Mammary epithelial cell (primary cell): ENCODE measurements at regions of chr3 and their contacts with region 1.

Region 1: DNA sequence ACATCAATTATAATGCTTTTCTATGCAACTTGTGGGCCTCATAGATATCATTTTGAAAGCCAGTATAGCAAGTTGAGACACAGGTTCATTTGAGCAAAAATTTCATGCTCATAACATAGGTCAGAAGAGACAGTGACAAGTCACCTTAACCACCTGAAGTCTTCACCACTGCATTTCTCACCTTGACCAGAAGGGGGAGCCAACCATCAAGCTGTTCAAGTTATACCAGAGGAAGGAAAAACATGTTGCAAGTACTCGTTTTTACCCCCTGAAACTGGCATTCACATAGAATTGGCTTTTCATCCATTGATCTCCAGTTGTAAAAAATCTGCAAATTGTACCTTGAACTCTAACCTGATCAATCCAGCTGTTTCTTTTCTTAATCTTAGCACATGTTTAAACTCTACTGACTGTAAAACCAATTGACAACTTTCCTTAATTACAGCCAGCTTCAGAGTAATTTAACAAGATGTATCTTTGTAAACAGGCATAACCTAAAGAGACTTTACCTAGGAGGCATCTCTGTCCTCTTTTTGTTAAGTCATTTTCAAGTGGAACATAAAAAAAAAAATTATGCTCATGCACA is 1.4 kb downstream of the LMOD3 start:
- DNase-seq: peak; percentile 67
- H3K4me3 ChIP-seq: no peak overlapping the region
- H3K27ac ChIP-seq: no peak overlapping the region
- H3K4me1 ChIP-seq: peaks cover 12% of the 10 kb centered on the region
- H3K27me3 ChIP-seq: no peaks in the 10 kb centered on the region
- CTCF ChIP-seq: peak; percentile 96 to 99

Region 2: DNA sequence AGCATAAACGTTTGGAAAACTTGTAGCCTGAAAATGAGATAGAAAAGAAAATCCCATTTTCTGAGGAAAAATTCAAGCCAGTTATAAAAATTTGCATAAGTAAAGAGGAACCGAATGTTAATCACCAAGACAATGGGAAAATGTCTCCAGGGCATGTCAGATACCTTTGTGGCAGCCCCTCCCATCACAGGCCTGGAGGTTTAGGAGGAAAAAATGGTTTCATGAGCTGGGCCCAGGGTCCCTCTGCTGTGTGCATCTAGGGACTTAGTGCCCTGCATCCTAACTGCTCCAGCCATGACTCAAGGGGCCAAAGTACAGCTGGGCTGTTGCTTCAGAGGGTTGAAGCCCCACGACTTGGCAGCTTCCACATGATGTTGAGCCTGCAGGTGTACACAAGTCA is 341.7 kb before region 1 on chr3:
- CTCF ChIA-PET with region 1: no interaction called
- dilution Hi-C with region 1: no loop called
- in situ Hi-C with region 1: no loop called
- intact Hi-C with region 1: no loop called
- DNase-seq: no peak
- H3K4me3 ChIP-seq: no peak overlapping the region
- H3K27ac ChIP-seq: no peak overlapping the region
- H3K4me1 ChIP-seq: no peaks in the 10 kb centered on the region
- H3K27me3 ChIP-seq: no peaks in the 10 kb centered on the region
- CTCF ChIP-seq: no peak

Region 3: GRCh38 chr3:68893600-68894239 is 227.3 kb before region 1 on chr3:
- CTCF ChIA-PET with region 1: no interaction called
- dilution Hi-C with region 1: no loop called
- in situ Hi-C with region 1: no loop called
- intact Hi-C with region 1: no loop called
- DNase-seq: peak; percentile 16
- H3K4me3 ChIP-seq: no peak overlapping the region
- H3K27ac ChIP-seq: no peak overlapping the region
- H3K4me1 ChIP-seq: no peaks in the 10 kb centered on the region
- H3K27me3 ChIP-seq: no peaks in the 10 kb centered on the region
- CTCF ChIP-seq: peak; percentile 23 to 44

Region 4: GRCh38 chr3:69051756-69052471 is 69.1 kb before region 1 on chr3 and contains the start of gene TMF1:
- CTCF ChIA-PET with region 1: no interaction called
- dilution Hi-C with region 1: no loop called
- in situ Hi-C with region 1: no loop called
- intact Hi-C with region 1: loop called (anchors 5 kb)
- DNase-seq: peak; percentile 98
- H3K4me3 ChIP-seq: peak within 1 kb of the TSS; percentile 75 to 94 (median 90)
- H3K27ac ChIP-seq: peak within 1 kb of the TSS; percentile 91
- H3K4me1 ChIP-seq: peaks cover 10% of the 10 kb centered on the region
- H3K27me3 ChIP-seq: no peaks in the 10 kb centered on the region
- CTCF ChIP-seq: no peak
- total RNA-seq, gene TMF1: 35.4 to 46.3 TPM

Region 5: GRCh38 chr3:69250014-69250413 is 129.0 kb after region 1 on chr3:
- CTCF ChIA-PET with region 1: no interaction called
- dilution Hi-C with region 1: no loop called
- in situ Hi-C with region 1: no loop called
- intact Hi-C with region 1: no loop called
- DNase-seq: no peak
- H3K4me3 ChIP-seq: no peak overlapping the region
- H3K27ac ChIP-seq: no peak overlapping the region
- H3K4me1 ChIP-seq: peaks cover 11% of the 10 kb centered on the region
- H3K27me3 ChIP-seq: no peaks in the 10 kb centered on the region
- CTCF ChIP-seq: no peak

Region 6: DNA sequence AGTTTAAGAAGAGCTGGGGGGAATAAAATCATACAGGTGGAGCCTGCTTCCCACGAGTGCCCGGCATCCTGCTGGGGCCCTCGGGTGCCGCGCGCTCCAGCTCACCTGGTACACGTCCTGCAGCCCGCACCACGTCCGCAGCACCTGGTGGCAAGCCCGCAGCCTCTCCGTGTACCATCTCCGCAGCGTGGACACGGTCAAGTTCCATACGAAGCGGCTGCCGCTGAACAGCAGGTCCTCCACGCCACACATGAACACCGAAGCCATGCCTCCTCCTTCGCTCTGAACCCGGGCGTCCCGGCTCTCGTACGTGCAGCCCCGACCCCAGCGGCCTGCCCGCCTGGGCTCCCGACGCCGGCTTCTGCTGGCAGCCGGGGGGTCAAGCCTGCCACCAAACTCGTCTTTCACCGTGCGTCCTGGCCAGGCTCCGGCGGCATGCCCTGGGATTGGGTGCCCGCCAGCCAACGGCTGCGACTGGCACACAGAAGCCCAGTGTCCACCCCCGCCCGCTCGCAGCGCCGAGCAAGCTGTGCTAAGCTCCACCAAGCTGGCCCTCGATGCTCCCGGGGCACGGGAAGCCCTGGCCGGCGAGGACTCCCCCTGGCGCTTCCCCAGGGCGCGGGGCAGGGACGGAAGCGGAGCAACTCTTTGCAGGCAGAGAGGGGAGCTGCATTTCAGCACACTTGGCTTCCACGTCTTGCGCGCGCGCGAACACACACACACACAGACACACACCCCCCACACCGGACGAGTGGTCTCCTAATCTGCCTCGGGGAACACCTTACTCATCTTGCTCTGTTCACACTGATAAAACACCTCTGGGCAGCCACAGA is 265.0 kb after region 1 on chr3 and contains the start of gene FRMD4B:
- CTCF ChIA-PET with region 1: no interaction called
- dilution Hi-C with region 1: no loop called
- in situ Hi-C with region 1: no loop called
- intact Hi-C with region 1: no loop called
- DNase-seq: peak; percentile 65
- H3K4me3 ChIP-seq: peak within 1 kb of the TSS; percentile 32 to 68 (median 59)
- H3K27ac ChIP-seq: peak within 1 kb of the TSS; percentile 76
- H3K4me1 ChIP-seq: peaks cover 41% of the 10 kb centered on the region
- H3K27me3 ChIP-seq: no peaks in the 10 kb centered on the region
- CTCF ChIP-seq: peak; percentile 16 to 43
- total RNA-seq, gene FRMD4B: 42.0 to 64.1 TPM

Region 7: GRCh38 chr3:69425261-69425660 is 304.3 kb after region 1 on chr3:
- CTCF ChIA-PET with region 1: no interaction called
- dilution Hi-C with region 1: no loop called
- in situ Hi-C with region 1: no loop called
- intact Hi-C with region 1: loop called (anchors 2 kb)
- DNase-seq: peak; percentile 37
- H3K4me3 ChIP-seq: no peak overlapping the region
- H3K27ac ChIP-seq: no peak overlapping the region
- H3K4me1 ChIP-seq: peaks cover 36% of the 10 kb centered on the region
- H3K27me3 ChIP-seq: no peaks in the 10 kb centered on the region
- CTCF ChIP-seq: peak; percentile 67 to 73